ENCODE measurements at regions of chr19 and their contacts with region 1.

Region 1: DNA sequence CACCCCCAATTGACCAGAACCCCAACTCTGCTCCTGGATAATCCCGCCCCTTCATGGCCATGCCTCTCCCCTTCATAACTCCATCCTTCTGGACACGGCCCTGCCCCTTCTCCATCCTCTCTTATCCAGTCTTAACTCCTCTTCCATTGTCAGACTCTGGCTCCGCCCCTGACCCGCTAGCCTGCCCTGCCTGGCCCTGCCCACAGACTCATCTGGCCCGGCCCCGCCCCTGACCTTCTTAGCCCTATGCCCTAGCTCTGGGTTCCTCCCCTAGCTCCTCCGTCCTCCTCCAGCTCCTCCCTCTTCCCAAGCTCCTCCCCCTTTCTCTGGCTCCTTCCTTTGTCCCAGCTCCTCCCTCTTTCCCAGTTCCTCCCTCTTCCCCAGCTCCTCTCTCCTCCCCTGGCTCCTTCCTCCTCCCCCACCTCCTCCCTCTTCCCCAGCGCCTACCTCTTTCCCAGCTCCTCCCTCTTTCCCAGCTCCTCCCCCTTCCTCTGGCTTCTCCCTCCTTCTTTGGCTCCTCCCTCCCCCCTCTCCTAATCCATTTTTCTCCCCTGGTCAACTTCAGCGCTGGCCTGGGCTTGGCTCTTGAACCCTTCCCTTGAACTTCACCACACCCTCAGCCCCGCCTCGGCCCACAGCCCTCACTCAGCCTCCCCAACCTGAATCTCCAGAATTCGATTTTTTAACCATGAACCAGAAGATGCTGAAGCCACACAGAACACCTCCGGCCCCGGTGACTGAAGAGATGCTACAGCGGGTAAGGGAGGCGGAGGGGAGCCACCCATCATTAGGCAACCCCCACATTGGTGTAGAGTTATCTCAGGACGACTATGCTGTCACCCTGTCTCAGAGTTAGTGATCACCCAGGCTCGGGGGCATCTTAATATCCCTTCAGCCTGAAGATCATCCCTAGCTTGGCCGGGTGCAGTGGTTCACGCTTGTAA is 9.2 kb upstream of the ZNF358 start:
- DNase-seq: peak; percentile 99
- ATAC-seq: peak; percentile 89
- H3K4me3 ChIP-seq: peak overlapping the region; percentile 48
- H3K27ac ChIP-seq: no peak overlapping the region
- H3K4me1 ChIP-seq: peaks cover 16% of the 10 kb centered on the region
- H3K27me3 ChIP-seq: no peaks in the 10 kb centered on the region
- CTCF ChIP-seq: no peak

Region 2: DNA sequence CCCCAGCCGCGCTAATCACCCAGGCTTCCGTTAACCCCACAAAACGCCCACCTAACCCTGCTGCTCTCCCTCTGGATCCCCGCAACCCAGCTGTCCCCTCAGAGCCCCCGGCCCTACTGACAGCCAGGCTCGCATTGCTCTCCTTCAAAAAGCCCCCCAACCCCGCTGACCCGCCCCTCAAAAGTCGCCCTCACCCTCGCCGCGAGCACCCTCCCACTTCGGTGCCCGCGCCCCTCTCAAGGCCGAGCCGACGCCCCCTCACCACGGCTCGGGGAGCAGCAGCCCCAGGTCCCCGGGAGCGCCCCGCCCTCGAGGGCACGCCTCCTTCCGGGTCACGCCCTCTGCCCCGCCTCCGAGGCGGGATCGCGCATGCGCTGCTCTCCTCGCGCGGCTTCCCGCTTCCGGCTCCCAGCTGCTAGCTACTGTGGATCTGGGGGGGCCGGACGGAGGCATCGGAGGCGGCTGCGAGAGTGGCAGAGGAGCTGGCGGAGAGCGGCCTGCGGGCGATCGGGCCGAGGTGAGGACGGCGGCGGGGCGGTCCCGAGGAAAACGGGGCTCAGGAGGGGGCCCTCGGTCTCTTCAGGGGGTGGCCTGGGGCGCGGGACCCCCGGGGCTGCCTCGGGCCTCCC is 111.8 kb before region 1 on chr19:
- CTCF ChIA-PET with region 1: no interaction called
- POLR2A ChIA-PET with region 1: no interaction called
- intact Hi-C with region 1: loop called (anchors 10 kb)
- DNase-seq: peak; percentile 96
- ATAC-seq: peak; percentile 35
- H3K4me3 ChIP-seq: peak overlapping the region; percentile 84
- H3K27ac ChIP-seq: peak overlapping the region; percentile 13
- H3K4me1 ChIP-seq: peaks cover 54% of the 10 kb centered on the region
- H3K27me3 ChIP-seq: no peaks in the 10 kb centered on the region
- CTCF ChIP-seq: 0 out of 2 replicates have a peak, but pooled peaks have one; percentile 18